ENCODE measurements at regions of chr1 and their contacts with region 1.

Region 1: GRCh38 chr1:48498096-48498791 is 26.2 kb upstream of the SPATA6 start:
- DNase-seq: peak; percentile 75
- ATAC-seq: peak; percentile 94
- H3K4me3 Mint-ChIP-seq: no peak overlapping the region
- H3K27ac Mint-ChIP-seq: no peak overlapping the region
- H3K4me1 Mint-ChIP-seq: peaks cover 2% of the 10 kb centered on the region
- H3K27me3 Mint-ChIP-seq: peaks cover 4% of the 10 kb centered on the region

Region 2: GRCh38 chr1:48356901-48357300 is 141.3 kb before region 1 on chr1:
- CTCF ChIA-PET with region 1: no interaction called
- POLR2A ChIA-PET with region 1: no interaction called
- DNase-seq: no peak
- ATAC-seq: no peak
- H3K4me3 Mint-ChIP-seq: no peak overlapping the region
- H3K27ac Mint-ChIP-seq: no peak overlapping the region
- H3K4me1 Mint-ChIP-seq: no peaks in the 10 kb centered on the region
- H3K27me3 Mint-ChIP-seq: no peaks in the 10 kb centered on the region

Region 3: GRCh38 chr1:48471691-48472576 is 26.3 kb before region 1 on chr1 and contains the start of gene SPATA6:
- CTCF ChIA-PET with region 1: interaction called, 10 read pairs
- POLR2A ChIA-PET with region 1: no interaction called
- DNase-seq: peak; percentile 96
- ATAC-seq: peak; percentile 96
- H3K4me3 Mint-ChIP-seq: peak within 1 kb of the TSS; percentile 83
- H3K27ac Mint-ChIP-seq: peak within 1 kb of the TSS; percentile 48
- H3K4me1 Mint-ChIP-seq: peaks cover 21% of the 10 kb centered on the region
- H3K27me3 Mint-ChIP-seq: peaks cover 20% of the 10 kb centered on the region
- total RNA-seq, gene SPATA6: 0.89 to 0.95 TPM